PC-3 (cell line): ENCODE measurements at regions of chr14 and their contacts with region 1.

Region 1: GRCh38 chr14:37197421-37198272 is at the start of gene MIPOL1:
- DNase-seq: peak; percentile 93
- ATAC-seq: peak; percentile 72
- H3K4me3 ChIP-seq: peak within 1 kb of the TSS; percentile 83
- H3K27ac ChIP-seq: peak within 1 kb of the TSS; percentile 81
- H3K4me1 ChIP-seq: peaks cover 68% of the 10 kb centered on the region
- H3K27me3 ChIP-seq: no peaks in the 10 kb centered on the region
- CTCF ChIP-seq: peak; percentile 67
- total RNA-seq, gene MIPOL1: 14.2 and 22.5 TPM in 2 replicates

Region 2: DNA sequence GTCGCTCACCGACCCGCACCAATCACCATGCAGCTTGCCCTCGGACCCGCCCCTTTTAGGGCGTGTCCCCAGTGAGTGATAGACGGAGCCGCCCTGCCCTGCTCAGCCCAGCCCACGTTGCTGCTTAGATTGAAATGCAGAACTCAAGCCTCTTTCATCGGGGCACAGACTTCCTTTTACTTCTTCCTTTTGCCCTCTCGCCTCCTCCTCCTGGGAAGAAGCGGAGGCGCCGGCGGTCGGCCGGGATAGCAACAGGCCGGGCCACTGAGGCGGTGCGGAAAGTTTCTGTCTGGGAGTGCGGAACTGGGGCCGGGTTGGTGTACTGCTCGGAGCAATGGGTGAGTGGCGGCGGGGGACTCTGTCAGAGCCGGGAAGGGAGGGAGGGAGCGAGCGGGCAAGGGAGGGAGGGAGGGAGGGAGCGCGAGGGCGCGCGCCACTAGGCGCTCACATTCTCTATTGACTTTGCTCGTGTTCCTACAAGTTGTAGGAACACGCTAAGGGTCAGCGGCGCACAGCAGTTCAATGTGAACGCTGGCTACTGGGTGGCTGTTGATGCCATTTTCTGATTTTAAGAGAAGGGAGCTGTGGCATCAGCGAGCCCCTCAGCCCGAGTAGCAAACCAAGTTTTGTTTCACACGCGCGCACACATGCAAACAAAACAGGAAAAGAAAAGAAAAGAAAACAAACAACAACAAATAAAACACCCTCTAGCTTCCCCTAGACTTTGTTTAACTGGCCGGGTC is 535.7 kb before region 1 on chr14 and contains the start of gene PAX9:
- CTCF ChIA-PET with region 1: no interaction called
- POLR2A ChIA-PET with region 1: interaction called, 3 read pairs
- intact Hi-C with region 1: loop called (anchors 2 kb)
- DNase-seq: peak; percentile 99
- ATAC-seq: peak; percentile 78
- H3K4me3 ChIP-seq: peak within 1 kb of the TSS; percentile 89
- H3K27ac ChIP-seq: peak within 1 kb of the TSS; percentile 77
- H3K4me1 ChIP-seq: peaks cover 25% of the 10 kb centered on the region
- H3K27me3 ChIP-seq: no peaks in the 10 kb centered on the region
- CTCF ChIP-seq: no peak
- total RNA-seq, gene PAX9: 14.3 and 14.9 TPM in 2 replicates

Region 3: GRCh38 chr14:37150414-37150813 is 47.2 kb before region 1 on chr14:
- CTCF ChIA-PET with region 1: interaction called, 4 read pairs
- POLR2A ChIA-PET with region 1: interaction called, 4 read pairs
- intact Hi-C with region 1: loop called (anchors 1 kb)
- DNase-seq: peak; percentile 76
- ATAC-seq: peak; percentile 82
- H3K4me3 ChIP-seq: no peak overlapping the region
- H3K27ac ChIP-seq: no peak overlapping the region
- H3K4me1 ChIP-seq: peaks cover 5% of the 10 kb centered on the region
- H3K27me3 ChIP-seq: no peaks in the 10 kb centered on the region
- CTCF ChIP-seq: peak; percentile 90

Region 4: GRCh38 chr14:37187294-37187693 is 10.4 kb before region 1 on chr14:
- CTCF ChIA-PET with region 1: no interaction called
- POLR2A ChIA-PET with region 1: interaction called, 10 read pairs
- intact Hi-C with region 1: no loop called
- DNase-seq: no peak
- ATAC-seq: peak; percentile 29; the same call in 1 of the 2 replicates
- H3K4me3 ChIP-seq: no peak overlapping the region
- H3K27ac ChIP-seq: no peak overlapping the region
- H3K4me1 ChIP-seq: peaks cover 8% of the 10 kb centered on the region; the same call in 1 of the 2 replicates
- H3K27me3 ChIP-seq: no peaks in the 10 kb centered on the region
- CTCF ChIP-seq: no peak

Region 5: GRCh38 chr14:37230551-37231194 is 33.0 kb after region 1 on chr14:
- CTCF ChIA-PET with region 1: interaction called, 9 read pairs
- POLR2A ChIA-PET with region 1: interaction called, 3 read pairs
- intact Hi-C with region 1: loop called (anchors 2 kb)
- DNase-seq: peak; percentile 89
- ATAC-seq: peak; percentile 80
- H3K4me3 ChIP-seq: no peak overlapping the region
- H3K27ac ChIP-seq: no peak overlapping the region
- H3K4me1 ChIP-seq: no peaks in the 10 kb centered on the region
- H3K27me3 ChIP-seq: no peaks in the 10 kb centered on the region
- CTCF ChIP-seq: peak; percentile 93